Activated B cell treated with CpG ODN at 0.5 μM for 24 hours (primary cell): ENCODE measurements at regions of chr5 and their contacts with region 1.

Region 1: DNA sequence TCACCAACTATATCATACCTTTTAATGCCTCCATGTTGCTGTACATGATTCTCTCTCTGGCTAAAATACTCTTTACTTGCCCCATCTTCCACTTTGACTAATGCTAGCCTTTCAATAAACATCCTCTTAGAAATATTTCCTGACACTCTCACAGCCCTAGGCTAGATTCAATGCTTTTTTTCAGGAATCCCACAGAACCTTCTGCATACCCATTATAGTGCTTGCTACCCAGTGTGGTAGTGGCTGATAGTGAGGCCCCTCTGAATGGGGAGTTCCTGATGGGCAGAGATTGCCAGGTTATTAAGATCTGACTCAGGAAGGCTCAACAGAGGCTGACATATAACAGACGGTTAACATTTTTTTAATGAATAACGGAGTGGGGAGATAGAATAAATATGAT is 11.6 kb downstream of the SSBP2 start:
- DNase-seq: no peak
- ATAC-seq: no peak
- H3K4me3 Mint-ChIP-seq: no peak overlapping the region
- H3K27ac Mint-ChIP-seq: no peak overlapping the region
- H3K4me1 Mint-ChIP-seq: peaks cover 14% of the 10 kb centered on the region
- H3K27me3 Mint-ChIP-seq: no peaks in the 10 kb centered on the region
- CTCF ChIP-seq: no peak

Region 2: DNA sequence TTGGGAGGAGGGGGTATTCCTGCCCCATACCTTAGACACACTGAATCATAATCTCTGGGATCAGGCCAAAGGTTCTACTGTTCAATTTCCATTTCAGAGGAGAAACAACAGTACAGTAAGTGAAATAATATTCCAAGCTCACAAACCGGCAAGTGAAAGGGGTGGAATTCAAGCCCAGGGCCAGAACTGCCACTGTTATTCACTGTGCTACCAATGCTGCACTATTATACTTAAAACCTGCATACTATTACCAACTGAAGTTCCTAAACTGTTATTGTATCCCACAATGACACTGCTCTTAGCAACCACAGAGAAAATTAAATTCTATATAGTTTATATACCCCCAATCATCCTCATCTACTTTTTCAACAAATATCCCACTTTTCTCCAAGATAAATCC is 13.0 kb before region 1 on chr5:
- CTCF ChIA-PET with region 1: no interaction called
- POLR2A ChIA-PET with region 1: interaction called, 4 read pairs
- intact Hi-C with region 1: loop called (anchors 2 kb)
- DNase-seq: no peak
- ATAC-seq: no peak
- H3K4me3 Mint-ChIP-seq: no peak overlapping the region
- H3K27ac Mint-ChIP-seq: no peak overlapping the region
- H3K4me1 Mint-ChIP-seq: peaks cover 64% of the 10 kb centered on the region
- H3K27me3 Mint-ChIP-seq: no peaks in the 10 kb centered on the region
- CTCF ChIP-seq: no peak